GM10248 (cell line): ENCODE measurements at regions of chr3 and their contacts with region 1.

Region 1: DNA sequence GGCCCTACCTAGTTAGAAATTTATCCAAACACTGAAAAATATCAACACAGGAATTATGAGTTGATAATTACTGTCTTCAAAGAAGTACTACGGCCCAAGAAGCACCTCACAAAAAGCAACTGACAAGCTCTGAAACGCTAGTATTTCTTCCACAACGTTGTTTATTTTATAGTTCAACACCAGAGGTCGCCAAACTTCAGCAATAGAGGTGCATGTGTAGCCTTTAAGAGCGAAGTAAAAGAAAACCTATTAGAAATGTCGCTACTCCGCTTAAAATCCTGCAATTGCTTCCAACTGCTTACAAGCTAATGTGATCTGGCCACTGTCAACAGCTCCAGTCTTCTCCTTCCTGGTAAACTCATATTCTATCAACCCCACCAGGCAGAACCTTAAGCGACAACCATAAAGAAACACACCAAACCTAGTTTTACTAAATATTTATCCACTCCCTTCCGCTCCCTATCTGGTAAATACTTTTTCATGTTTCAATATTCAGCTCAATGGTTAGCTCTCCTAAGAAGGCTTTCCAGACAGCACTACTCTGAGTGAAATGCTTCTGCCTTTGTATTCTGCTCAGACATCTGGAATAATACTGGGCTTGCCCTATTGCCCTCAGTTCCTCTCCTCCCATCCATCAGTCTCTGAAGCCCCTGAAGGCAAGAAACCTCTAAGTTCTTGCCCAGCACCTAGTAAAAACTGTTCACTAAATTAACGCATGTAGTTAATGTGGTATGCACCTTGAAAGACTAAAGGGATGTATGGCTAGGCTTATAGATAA is 110.2 kb downstream of the NR1I2 start:
- DNase-seq: peak; percentile 19
- CTCF ChIP-seq: peak; percentile 60

Region 2: GRCh38 chr3:118801899-118802298 is 1090.2 kb before region 1 on chr3:
- CTCF ChIA-PET with region 1: no interaction called
- POLR2A ChIA-PET with region 1: no interaction called
- DNase-seq: no peak
- CTCF ChIP-seq: no peak

Region 3: GRCh38 chr3:119227070-119227850 is 664.9 kb before region 1 on chr3:
- CTCF ChIA-PET with region 1: no interaction called
- POLR2A ChIA-PET with region 1: no interaction called
- DNase-seq: no peak
- CTCF ChIP-seq: no peak

Region 4: DNA sequence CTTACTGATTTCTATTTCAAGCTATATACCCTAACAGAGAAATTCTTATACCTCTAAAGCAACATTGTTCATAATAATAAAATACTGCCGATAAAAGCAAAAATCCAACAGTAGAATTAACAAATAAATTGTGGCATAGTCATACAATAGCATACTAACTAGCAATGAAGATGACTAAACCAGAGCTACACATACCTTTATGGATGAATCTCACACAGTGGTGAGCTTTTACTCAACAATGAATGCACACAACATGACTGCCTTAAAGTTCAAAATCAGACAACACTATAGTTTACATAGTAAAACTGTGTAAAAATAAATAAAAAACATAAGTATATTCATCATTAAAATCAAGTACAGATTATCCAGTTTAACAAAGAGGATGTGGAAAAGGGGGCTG is 11.2 kb before region 1 on chr3:
- CTCF ChIA-PET with region 1: interaction called, 22 read pairs
- POLR2A ChIA-PET with region 1: no interaction called
- DNase-seq: no peak
- CTCF ChIP-seq: no peak

Region 5: DNA sequence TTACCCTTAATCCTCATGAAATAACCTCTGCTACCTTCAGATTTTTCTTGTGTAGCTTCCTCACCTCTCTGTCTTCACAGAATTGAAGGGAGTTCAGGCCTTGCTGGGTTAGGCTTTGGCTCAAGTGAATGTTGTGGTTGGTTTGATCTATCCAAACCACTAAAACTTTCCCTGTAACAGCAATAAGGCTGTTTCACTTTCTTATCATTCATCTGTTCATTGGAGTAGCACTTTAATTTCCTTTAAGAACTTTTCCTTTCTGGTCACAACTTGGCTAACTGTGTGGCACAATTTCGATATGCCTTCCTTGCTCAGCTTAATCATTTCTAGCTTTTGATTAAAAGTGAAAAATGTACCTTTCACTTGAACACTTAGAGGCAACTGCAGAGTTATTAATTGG is 19.6 kb after region 1 on chr3:
- CTCF ChIA-PET with region 1: interaction called, 12 read pairs
- POLR2A ChIA-PET with region 1: no interaction called
- DNase-seq: no peak
- CTCF ChIP-seq: no peak